Astrocyte of the cerebellum (primary cell): ENCODE measurements at regions of chr6 and their contacts with region 1.

Region 1: GRCh38 chr6:11770546-11771466 is 7.8 kb downstream of the ADTRP start:
- DNase-seq: peak; percentile 78
- H3K4me3 ChIP-seq: no peak overlapping the region
- CTCF ChIP-seq: no peak

Region 2: GRCh38 chr6:11732036-11732631 is 38.7 kb before region 1 on chr6:
- in situ Hi-C with region 1: loop called (anchors 5 kb)
- DNase-seq: no peak
- H3K4me3 ChIP-seq: no peak overlapping the region
- CTCF ChIP-seq: no peak

Region 3: DNA sequence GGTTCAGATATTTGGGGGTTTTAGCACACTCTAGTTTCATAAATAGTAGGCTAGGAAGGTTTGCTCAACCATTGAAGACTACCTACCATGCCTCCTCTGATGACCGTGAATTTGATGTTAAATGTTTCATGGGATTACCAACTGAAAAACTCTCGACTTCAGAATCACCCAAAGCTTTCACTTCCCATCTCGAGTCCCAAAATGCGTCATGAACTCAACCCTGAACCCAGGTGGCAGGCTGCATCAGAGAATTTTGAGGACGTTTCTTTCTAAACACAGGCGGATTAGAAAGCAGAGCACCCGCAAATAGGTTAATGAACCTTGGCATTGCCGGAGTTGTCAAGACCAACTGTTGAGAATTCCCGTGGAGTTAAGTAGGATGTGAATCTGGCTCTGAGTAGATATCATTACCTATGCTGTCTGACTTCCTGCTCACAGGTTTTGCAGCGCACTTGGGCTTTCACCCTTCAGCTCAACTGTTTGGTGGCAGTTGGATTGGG is 106.2 kb after region 1 on chr6:
- in situ Hi-C with region 1: loop called (anchors 5 kb)
- DNase-seq: no peak
- H3K4me3 ChIP-seq: no peak overlapping the region
- CTCF ChIP-seq: no peak

Region 4: GRCh38 chr6:12440981-12441380 is 670.2 kb after region 1 on chr6:
- in situ Hi-C with region 1: no loop called
- DNase-seq: no peak
- H3K4me3 ChIP-seq: no peak overlapping the region
- CTCF ChIP-seq: no peak